Left cardiac atrium (tissue), 4 donors: ENCODE measurements at regions of chr6 and their contacts with region 1.

Region 1: DNA sequence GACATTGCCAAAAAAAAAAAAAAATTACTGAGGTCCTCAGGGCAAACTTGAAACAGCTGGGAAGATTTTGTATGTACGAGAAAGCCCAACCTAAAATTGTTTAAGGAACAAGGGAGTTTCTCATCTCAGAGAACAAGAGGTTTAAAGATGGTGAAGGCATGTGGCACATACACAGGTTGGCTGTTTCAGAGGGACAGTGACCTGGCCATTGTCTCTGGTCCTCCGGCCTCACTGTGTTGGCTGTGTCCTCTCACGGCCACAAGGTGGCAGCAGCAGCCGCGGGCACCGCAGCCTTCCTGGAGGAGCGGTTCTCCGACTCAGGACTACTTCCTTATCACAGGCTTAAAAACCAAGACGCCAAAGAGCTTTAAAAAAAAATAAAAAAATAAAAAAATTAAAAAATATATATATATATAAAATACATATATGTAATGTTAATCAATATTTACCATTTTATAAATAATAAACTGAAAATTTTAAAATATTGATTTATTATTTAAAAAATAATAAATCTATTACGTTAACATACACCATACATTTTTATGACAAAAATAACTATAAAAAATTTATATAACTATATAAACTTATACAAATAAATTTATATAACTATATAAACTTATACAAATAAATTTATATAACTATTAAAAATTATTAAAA is 52.8 kb downstream of the GTF2H5 start:
- DNase-seq: peak; percentile 83
- ATAC-seq: peak; percentile 92 to 97

Region 2: GRCh38 chr6:158377860-158378259 is 156.9 kb after region 1 on chr6:
- intact Hi-C with region 1: no loop called
- DNase-seq: no peak
- ATAC-seq: peak; percentile 51 to 57

Region 3: GRCh38 chr6:158518191-158519127 is 297.5 kb after region 1 on chr6:
- intact Hi-C with region 1: loop called (anchors 10 kb)
- DNase-seq: peak; percentile 41
- ATAC-seq: peak; percentile 74 to 81

Region 4: DNA sequence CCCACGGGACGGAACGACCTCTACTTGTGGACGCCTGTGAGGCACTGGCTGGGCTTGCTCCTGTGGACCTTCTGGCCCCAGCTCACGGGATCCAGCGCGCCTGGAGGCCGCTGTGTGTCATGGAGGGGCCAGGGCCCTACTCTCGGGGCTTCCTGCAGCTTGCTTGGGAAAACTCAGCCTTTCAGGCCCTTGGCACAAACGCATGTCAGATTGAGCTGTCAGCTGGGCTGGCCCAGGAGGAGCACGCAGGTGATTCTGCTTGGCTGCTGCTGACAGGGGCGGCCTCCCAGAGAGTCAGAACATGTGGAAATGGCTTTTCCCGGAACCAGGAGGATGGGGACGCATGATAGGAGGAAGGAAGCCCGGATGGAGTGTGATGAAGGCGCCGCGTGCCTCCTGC is 378.7 kb after region 1 on chr6:
- intact Hi-C with region 1: loop called in 1 of 2 experiments (anchors 5 kb)
- DNase-seq: no peak
- ATAC-seq: no peak

Region 5: GRCh38 chr6:158697811-158698210 is 476.9 kb after region 1 on chr6:
- intact Hi-C with region 1: loop called (anchors 5 to 10 kb)
- DNase-seq: no peak
- ATAC-seq: peak in 1 of 2 donors; percentile 49